Activated CD4-positive, alpha-beta memory T cell treated with anti-CD3 and anti-CD28 coated beads for 36 hours (primary cell): ENCODE measurements at regions of chr16 and their contacts with region 1.

Region 1: GRCh38 chr16:50548125-50548908 is at the start of gene NKD1:
- DNase-seq: peak; percentile 80
- H3K4me3 Mint-ChIP-seq: peak within 1 kb of the TSS; percentile 84
- H3K27ac Mint-ChIP-seq: peak within 1 kb of the TSS; percentile 9
- H3K4me1 Mint-ChIP-seq: peaks cover 7% of the 10 kb centered on the region
- H3K27me3 Mint-ChIP-seq: no peaks in the 10 kb centered on the region
- total RNA-seq, gene NKD1: 0.67 to 1.6 TPM

Region 2: GRCh38 chr16:50474138-50474537 is 74.2 kb before region 1 on chr16:
- CTCF ChIA-PET with region 1: no interaction called
- POLR2A ChIA-PET with region 1: no interaction called
- intact Hi-C with region 1: loop called (anchors 2 kb)
- DNase-seq: peak; percentile 47
- H3K4me3 Mint-ChIP-seq: no peak overlapping the region
- H3K27ac Mint-ChIP-seq: peak overlapping the region; percentile 19
- H3K4me1 Mint-ChIP-seq: peaks cover 16% of the 10 kb centered on the region
- H3K27me3 Mint-ChIP-seq: peaks cover under 1% of the 10 kb centered on the region

Region 3: DNA sequence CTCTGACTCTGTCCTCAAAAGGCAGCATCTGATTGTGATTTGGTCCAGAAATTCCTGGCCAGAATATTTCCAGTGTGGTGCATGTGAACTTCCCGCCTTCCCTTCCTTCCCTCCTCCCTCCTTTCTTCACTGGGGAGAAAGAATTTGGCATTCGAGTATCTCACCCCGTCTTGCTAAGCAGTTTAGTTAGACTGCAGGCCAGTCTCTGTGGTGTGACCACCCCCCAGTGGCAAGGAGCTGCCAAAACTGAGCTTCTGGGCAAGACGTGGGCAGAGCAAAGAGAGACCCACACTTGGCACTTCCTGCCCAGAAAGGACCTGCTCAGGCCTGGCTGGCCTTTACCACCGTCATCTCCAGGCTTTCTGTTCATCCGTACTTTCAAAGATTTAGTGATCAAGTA is 96.4 kb after region 1 on chr16:
- CTCF ChIA-PET with region 1: interaction called, 3 read pairs
- POLR2A ChIA-PET with region 1: no interaction called
- intact Hi-C with region 1: loop called (anchors 5 kb)
- DNase-seq: peak; percentile 59
- H3K4me3 Mint-ChIP-seq: no peak overlapping the region
- H3K27ac Mint-ChIP-seq: no peak overlapping the region
- H3K4me1 Mint-ChIP-seq: peaks cover 4% of the 10 kb centered on the region
- H3K27me3 Mint-ChIP-seq: no peaks in the 10 kb centered on the region